Left ventricle myocardium inferior (tissue), 1 donor: ENCODE measurements at regions of chr14 and their contacts with region 1.

Region 1: GRCh38 chr14:93939304-93940229 is 12.4 kb downstream of the FAM181A start:
- DNase-seq: peak; percentile 77
- H3K4me3 ChIP-seq: peak overlapping the region; percentile 46
- H3K27ac ChIP-seq: no peak overlapping the region
- H3K4me1 ChIP-seq: peaks cover 35% of the 10 kb centered on the region
- H3K27me3 ChIP-seq: peaks cover 17% of the 10 kb centered on the region
- CTCF ChIP-seq: peak; percentile 83

Region 2: DNA sequence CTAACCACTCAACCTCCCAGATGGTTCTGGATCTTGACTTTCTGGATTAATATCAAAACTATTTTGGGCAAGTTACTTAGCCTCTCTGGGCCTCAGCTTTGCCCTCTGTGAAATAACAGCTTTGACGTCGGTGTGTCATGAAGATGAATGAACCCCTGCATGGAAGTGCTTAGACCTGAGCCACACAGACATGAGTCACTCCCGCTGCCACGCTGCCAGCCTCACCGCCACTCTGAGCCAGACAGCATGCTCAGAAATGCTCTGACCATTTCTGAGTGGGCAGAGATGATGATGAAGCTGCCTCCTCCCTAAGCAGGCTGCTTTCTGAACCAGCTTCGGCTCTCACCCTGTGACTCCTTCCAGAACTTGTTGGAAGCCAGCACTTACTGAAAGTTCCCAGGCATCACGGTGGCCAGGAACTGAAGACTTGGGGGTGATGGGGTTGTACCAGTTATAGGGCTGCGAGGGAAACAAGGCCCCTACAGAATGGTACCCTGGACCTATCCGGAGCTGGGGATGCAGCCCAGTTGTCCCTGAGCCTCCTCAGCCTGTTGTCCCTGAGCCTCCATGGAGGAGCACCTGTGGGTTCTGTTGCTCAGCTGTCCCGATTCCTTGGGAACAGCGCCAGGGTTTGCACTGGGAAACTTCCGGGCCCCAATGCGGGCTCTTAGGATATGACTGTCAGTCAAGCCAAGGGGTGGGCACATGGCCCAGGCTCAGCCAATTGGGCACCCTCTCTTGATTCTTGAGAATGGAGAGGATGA is 55.5 kb after region 1 on chr14:
- intact Hi-C with region 1: loop called (anchors 5 kb)
- DNase-seq: peak; percentile 40
- H3K4me3 ChIP-seq: no peak overlapping the region
- H3K27ac ChIP-seq: peak overlapping the region; percentile 23
- H3K4me1 ChIP-seq: peaks cover 46% of the 10 kb centered on the region
- H3K27me3 ChIP-seq: no peaks in the 10 kb centered on the region
- CTCF ChIP-seq: no peak